A549 (cell line): ENCODE measurements at regions of chr17 and their contacts with region 1.

Region 1: DNA sequence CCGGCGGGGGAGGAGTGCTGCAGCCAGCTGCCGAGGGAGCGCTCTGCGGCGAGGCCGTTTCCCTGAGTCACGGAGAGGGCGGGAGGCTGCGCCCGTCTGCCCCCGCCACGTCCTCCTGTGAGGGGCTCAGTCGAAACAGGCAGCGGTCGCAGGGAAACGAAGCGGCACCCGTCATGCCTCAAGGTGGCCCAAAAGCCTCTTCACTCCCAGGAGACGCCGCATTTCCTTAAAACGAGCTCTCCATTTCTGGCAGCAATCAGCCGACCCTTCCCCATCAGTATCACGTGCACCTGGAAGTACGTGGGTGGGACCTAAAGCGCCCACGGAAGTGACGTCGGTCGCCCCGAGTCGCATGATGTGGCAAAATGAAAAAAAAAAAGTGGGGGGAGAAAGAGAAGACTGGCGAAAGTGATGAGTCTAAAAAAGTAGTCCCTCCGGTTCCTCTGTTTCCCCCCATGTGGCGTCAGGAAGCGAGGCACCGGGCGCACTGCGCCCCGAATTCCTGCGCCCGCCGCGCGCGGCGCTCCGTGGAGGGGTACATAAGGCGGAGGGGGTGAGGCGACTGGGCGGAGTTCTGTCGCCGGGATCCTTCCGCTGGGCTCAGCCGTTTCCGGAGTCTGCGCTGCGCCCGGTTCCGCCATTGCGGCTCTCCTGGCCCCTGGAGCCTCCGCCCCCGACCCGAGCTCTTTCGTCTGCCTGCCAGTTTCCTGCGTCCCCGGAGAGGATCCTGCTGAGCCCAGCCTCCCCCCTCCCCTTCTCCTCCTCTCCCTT is at the start of gene CLTC:
- DNase-seq: peak; percentile 93 to 99
- ATAC-seq: peak; percentile 93
- H3K4me3 ChIP-seq: peak within 1 kb of the TSS; percentile 93
- H3K27ac ChIP-seq: peak within 1 kb of the TSS; percentile 97 to 98
- H3K4me1 ChIP-seq: peaks cover 43% of the 10 kb centered on the region
- CTCF ChIP-seq: no peak
- EP300 ChIP-seq: peak in 1 of 2 experiments; percentile 73; a peak in 2 of 5 replicates
- POLR2A ChIP-seq: peak; percentile 84
- RAD21 ChIP-seq: no peak; a peak in 1 of 5 replicates
- polyA plus RNA-seq, gene CLTC: 360 and 376 TPM in 2 replicates

Region 2: GRCh38 chr17:59565171-59565969 is 54.1 kb before region 1 on chr17 and contains the start of gene DHX40:
- CTCF ChIA-PET with region 1: interaction called, 4 read pairs
- POLR2A ChIA-PET with region 1: interaction called, 21 read pairs
- DNase-seq: peak; percentile 95 to 98
- ATAC-seq: peak; percentile 91 to 94
- H3K4me3 ChIP-seq: peak within 1 kb of the TSS; percentile 83
- H3K27ac ChIP-seq: peak within 1 kb of the TSS; percentile 74 to 93
- H3K4me1 ChIP-seq: peaks cover 7% of the 10 kb centered on the region
- CTCF ChIP-seq: no peak
- EP300 ChIP-seq: no peak
- POLR2A ChIP-seq: peak; percentile 52
- RAD21 ChIP-seq: no peak
- polyA plus RNA-seq, gene DHX40: 87.4 and 109 TPM in 2 replicates

Region 3: DNA sequence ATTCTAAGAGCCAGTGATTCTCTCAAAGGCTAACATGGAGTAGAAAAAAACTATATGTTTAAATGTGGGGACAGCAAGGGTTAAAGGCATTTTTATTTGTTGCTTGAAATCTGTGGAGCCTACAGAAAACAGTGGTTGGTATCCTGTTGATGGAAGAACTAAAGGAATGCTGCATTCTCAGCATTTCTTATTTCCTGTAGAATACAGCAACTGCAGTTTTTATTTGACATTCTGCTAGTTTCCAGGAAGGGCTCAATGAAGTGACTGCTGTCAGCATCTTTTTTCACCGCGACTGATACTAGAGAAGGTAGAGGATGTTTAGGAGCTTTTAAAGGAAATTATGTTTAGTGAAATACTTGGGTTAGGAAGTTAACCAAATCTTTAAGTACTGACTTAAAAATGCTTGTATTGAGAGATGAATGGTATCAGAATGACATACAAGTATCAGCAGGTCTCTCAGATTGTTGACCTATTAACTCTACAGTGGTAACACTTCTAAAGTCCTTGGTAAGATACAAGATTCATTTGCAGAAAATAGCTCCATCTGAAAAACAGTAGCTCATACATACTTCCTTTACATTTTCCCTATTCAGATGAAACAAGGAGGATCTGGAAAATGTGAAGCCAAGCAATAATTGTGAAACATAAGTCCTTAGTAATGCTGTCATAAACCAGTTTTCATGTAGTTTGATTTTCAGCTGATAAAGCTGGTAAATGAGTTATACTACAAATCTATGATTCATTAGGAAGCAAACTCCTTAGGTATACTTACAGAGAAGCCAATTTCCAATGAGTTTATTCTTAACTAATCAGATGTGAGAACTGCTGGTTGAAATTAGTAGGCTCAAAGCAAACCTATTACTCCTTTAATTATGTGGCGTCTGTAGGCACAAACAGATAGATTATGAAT is 15.4 kb after region 1 on chr17:
- CTCF ChIA-PET with region 1: interaction called, 3 read pairs
- POLR2A ChIA-PET with region 1: interaction called, 11 read pairs
- DNase-seq: no peak
- ATAC-seq: 0 out of 6 replicates have a peak, but pooled peaks of 1 of the 2 experiments have one; percentile 22
- H3K4me3 ChIP-seq: no peak overlapping the region
- H3K27ac ChIP-seq: no peak overlapping the region
- H3K4me1 ChIP-seq: peaks cover 42% of the 10 kb centered on the region; the same call in 2 of the 3 replicates
- CTCF ChIP-seq: no peak
- EP300 ChIP-seq: no peak
- POLR2A ChIP-seq: no peak
- RAD21 ChIP-seq: no peak